Esophagus muscularis mucosa (tissue), 4 donors: ENCODE measurements at regions of chr1 and their contacts with region 1.

Region 1: GRCh38 chr1:113759333-113760101 is at the start of gene PHTF1:
- DNase-seq: peak; percentile 93
- H3K4me3 ChIP-seq: peak within 1 kb of the TSS; percentile 74 to 78 (median 76)
- H3K27ac ChIP-seq: peak within 1 kb of the TSS; percentile 86 to 95 (median 92)
- H3K4me1 ChIP-seq: peaks cover 10 to 34% (median 28%) of the 10 kb centered on the region in 4 donors
- H3K27me3 ChIP-seq: no peaks in the 10 kb centered on the region
- CTCF ChIP-seq: no peak
- EP300 ChIP-seq: no peak
- POLR2A ChIP-seq: peak; percentile 46
- total RNA-seq, gene PHTF1: 10.2 to 13.3 (median 11.8) TPM

Region 2: DNA sequence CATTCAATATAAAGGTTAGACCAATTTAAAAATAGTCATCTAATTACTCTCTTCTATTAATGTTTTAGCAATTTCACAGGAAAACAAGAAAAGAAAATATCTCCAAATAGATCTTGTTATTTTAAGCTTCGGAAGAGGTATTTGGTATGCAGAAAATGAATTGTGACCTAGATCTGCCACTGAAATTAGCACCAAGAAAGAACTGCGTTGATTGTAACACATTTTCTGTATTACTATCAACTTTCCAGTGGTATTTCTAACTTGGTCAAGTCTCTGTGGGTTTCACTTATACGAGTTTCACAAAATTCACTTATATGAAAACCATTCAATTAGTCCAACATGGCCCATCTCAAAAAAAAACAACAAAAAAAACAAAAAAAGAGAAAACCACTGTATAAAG is 41.0 kb after region 1 on chr1:
- intact Hi-C with region 1: no loop called
- DNase-seq: no peak
- H3K4me3 ChIP-seq: peak overlapping the region in 1 of 4 donors; percentile 11
- H3K27ac ChIP-seq: no peak overlapping the region
- H3K4me1 ChIP-seq: peaks cover 41 to 67% (median 66%) of the 10 kb centered on the region in 4 donors
- H3K27me3 ChIP-seq: no peaks in the 10 kb centered on the region
- CTCF ChIP-seq: no peak
- EP300 ChIP-seq: no peak
- POLR2A ChIP-seq: no peak

Region 3: DNA sequence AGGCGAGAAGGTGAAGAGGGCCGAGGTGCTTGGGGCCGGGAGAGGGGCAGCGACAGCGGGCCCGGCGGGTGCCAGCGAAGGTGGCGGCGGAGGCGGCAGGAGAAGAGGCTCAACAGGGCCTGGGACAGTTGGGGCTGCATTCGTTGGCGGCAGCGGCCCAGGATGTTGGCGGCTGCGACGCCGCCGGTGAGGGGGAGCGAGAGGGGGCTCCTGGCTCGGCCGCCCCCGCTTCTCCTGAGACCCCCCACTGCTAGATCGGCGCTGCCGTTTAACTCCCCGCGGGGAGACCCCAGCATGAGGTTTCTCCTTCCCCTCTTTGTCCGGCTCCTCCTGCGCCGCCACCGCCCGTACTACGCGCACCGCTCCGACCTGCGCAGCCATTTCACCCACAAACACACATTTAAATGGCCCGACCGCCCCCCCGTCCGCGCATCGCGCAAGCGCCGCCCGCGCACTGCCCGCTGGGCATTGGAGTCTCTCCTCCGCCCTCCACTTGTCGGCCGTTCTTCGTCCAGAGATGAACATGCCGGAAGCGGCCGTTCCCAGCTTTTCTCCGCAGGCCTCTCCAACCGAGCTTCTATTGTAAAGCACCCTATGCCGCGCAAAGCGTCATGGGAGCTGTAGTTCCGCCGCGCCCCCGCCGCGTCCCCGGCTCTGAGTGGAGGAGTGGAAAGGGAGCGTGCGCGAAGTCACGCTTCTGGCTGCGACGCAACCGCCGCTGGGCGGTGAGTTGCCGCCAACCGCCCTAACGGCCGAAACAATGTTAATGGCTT is 52.6 kb after region 1 on chr1 and contains the start of gene RSBN1:
- intact Hi-C with region 1: loop called (anchors 5 kb)
- DNase-seq: peak; percentile 99
- H3K4me3 ChIP-seq: peak within 1 kb of the TSS; percentile 85 to 93 (median 91)
- H3K27ac ChIP-seq: peak within 1 kb of the TSS; percentile 97 to 98 (median 98)
- H3K4me1 ChIP-seq: peaks cover 17 to 37% (median 32%) of the 10 kb centered on the region in 4 donors
- H3K27me3 ChIP-seq: no peaks in the 10 kb centered on the region
- CTCF ChIP-seq: peak in 1 of 3 experiments; percentile 31
- EP300 ChIP-seq: no peak
- POLR2A ChIP-seq: peak; percentile 81
- total RNA-seq, gene RSBN1: 15.8 to 24.3 (median 20.1) TPM

Region 4: DNA sequence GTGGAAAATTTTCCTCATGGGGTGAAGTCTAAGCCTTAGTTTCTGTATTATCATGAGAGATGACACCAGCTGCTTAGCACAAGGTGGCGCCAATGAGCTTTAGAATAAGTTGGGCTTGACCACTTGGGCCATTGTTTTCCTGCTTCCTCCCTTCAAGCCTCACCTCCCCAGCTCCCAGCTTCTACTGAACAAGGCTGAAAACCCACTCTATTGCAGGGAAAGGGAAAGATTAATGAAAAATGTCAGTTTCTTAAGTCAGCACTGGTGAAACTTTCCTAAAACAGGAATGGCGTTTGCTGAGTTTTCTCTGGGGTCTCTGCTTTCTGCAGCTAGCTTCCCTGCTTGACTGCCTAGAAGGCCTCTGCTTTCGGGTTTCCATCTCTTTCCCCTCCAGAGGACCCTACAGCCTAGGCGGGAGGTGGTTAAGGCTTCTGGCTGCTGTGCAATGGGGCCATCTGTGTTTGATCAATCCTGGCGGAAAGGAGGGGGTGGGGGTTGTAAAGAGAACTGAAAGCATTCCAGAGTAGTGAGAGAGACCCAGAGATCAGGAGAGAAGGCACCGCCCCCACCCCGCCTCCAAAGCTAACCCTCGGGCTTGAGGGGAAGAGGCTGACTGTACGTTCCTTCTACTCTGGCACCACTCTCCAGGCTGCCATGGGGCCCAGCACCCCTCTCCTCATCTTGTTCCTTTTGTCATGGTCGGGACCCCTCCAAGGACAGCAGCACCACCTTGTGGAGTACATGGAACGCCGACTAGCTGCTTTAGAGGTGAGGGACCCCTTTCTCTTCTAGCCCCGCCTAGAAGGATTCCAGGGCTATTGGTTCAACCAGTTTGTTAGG is 219.6 kb after region 1 on chr1 and contains the start of gene OLFML3:
- intact Hi-C with region 1: no loop called
- DNase-seq: peak; percentile 97
- H3K4me3 ChIP-seq: peak within 1 kb of the TSS; percentile 46 to 54 (median 48)
- H3K27ac ChIP-seq: peak within 1 kb of the TSS; percentile 77 to 84 (median 80)
- H3K4me1 ChIP-seq: peaks cover 43 to 92% (median 85%) of the 10 kb centered on the region in 4 donors
- H3K27me3 ChIP-seq: no peaks in the 10 kb centered on the region
- CTCF ChIP-seq: peak; percentile 70 to 72 (median 71)
- EP300 ChIP-seq: no peak
- POLR2A ChIP-seq: no peak
- total RNA-seq, gene OLFML3: 57.7 to 109 (median 67.4) TPM